ENCODE measurements at regions of chr18 and their contacts with region 1.

Region 1: DNA sequence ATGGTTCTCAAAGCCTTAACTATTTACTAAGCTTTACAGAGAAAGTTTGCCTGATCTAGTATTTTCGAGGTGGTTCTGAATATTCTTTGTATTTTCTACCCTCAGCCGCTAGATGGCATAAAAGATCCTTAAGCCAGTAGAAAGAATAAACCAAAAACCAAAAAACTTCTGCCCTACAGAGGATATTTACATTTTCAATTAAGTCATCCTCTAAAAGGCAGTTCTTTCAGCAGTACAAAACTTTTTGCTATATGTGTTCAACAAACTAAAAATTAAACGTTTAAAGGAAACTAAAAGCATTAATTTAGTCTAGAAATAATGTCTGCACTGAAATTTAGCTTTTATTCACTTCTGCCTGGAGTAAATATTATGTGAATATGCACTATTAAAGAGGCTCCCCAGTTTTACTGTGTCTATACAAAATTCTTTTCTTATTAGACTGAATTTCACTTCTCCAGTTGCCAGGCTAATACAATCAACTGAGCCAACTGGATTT is 297.5 kb downstream of the PIEZO2 start:
- DNase-seq: no peak
- H3K4me3 ChIP-seq: no peak overlapping the region
- H3K27ac ChIP-seq: no peak overlapping the region
- H3K4me1 ChIP-seq: peaks cover 0 to 7% (median 3%) of the 10 kb centered on the region in 4 experiments; a peak in 4 of 7 replicates
- H3K27me3 ChIP-seq: no peaks in the 10 kb centered on the region
- CTCF ChIP-seq: peak in 2 of 3 experiments; percentile 52 to 53; a peak in 2 of 4 replicates
- EP300 ChIP-seq: no peak
- POLR2A ChIP-seq: no peak
- RAD21 ChIP-seq: peak; percentile 79 to 85

Region 2: GRCh38 chr18:10748641-10749040 is 103.2 kb before region 1 on chr18:
- CTCF ChIA-PET with region 1: no interaction called
- POLR2A ChIA-PET with region 1: no interaction called
- DNase-seq: no peak
- H3K4me3 ChIP-seq: no peak overlapping the region
- H3K27ac ChIP-seq: no peak overlapping the region
- H3K4me1 ChIP-seq: peaks cover 0 to 1% (median 0%) of the 10 kb centered on the region in 4 experiments; a peak in 1 of 7 replicates
- H3K27me3 ChIP-seq: no peaks in the 10 kb centered on the region
- CTCF ChIP-seq: no peak
- EP300 ChIP-seq: no peak
- POLR2A ChIP-seq: no peak
- RAD21 ChIP-seq: no peak

Region 3: GRCh38 chr18:10841203-10841602 is 10.7 kb before region 1 on chr18:
- CTCF ChIA-PET with region 1: interaction called, 14 read pairs
- POLR2A ChIA-PET with region 1: no interaction called
- DNase-seq: no peak
- H3K4me3 ChIP-seq: no peak overlapping the region
- H3K27ac ChIP-seq: no peak overlapping the region
- H3K4me1 ChIP-seq: no peaks in the 10 kb centered on the region
- H3K27me3 ChIP-seq: peaks cover 0 to 1% (median 0%) of the 10 kb centered on the region in 4 experiments; a peak in 1 of 7 replicates
- CTCF ChIP-seq: no peak
- EP300 ChIP-seq: no peak
- POLR2A ChIP-seq: no peak
- RAD21 ChIP-seq: no peak

Region 4: GRCh38 chr18:10912790-10913545 is 61.1 kb after region 1 on chr18:
- CTCF ChIA-PET with region 1: no interaction called
- POLR2A ChIA-PET with region 1: no interaction called
- DNase-seq: no peak
- H3K4me3 ChIP-seq: no peak overlapping the region
- H3K27ac ChIP-seq: no peak overlapping the region
- H3K4me1 ChIP-seq: no peaks in the 10 kb centered on the region
- H3K27me3 ChIP-seq: peaks cover 0 to 1% (median 0%) of the 10 kb centered on the region in 4 experiments; a peak in 1 of 7 replicates
- CTCF ChIP-seq: no peak
- EP300 ChIP-seq: no peak
- POLR2A ChIP-seq: no peak
- RAD21 ChIP-seq: no peak

Region 5: DNA sequence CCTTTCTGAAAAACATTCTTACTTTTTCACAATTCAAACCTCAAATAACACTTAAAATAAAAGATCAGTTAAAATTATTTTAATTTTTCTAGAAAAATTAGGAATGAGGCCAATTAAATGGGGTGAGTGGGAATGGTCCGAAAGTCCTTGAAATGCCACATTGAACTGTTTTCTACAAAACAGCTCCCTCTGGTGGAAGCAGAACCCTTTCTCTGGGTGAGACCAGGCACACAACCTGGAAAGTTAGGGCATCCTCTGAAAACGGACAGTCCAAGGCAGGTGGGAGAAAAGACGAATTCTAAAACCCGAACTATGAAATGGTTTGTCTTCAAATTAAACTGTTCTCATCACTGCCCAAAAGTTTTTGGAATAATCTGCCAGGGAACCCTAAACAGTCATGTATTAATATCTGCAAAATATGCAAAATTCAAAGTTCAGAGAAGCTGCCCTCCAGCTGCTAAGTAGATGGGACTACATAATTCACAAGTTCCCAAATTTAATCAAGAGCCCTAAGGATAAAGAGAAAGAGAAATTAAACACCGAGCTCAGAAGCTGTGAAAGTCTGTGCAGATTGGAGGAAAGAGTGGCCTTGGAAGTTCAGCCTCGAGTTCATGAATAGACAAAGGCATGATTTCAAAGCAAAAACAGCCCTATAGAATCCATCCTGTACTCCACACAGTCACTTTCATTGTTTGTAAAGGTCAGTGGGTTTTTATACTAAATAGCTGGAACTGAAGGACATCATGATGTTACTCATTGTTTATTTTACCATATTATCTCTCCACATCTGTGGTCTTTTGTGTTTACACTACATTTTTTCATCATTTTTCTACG is 189.2 kb after region 1 on chr18:
- CTCF ChIA-PET with region 1: interaction called, 78 read pairs
- POLR2A ChIA-PET with region 1: no interaction called
- DNase-seq: peak in 1 of 2 experiments; percentile 58
- H3K4me3 ChIP-seq: no peak overlapping the region
- H3K27ac ChIP-seq: no peak overlapping the region
- H3K4me1 ChIP-seq: peaks cover 0 to 4% (median 0%) of the 10 kb centered on the region in 4 experiments; a peak in 1 of 7 replicates
- H3K27me3 ChIP-seq: no peaks in the 10 kb centered on the region
- CTCF ChIP-seq: peak; percentile 42 to 76 (median 73)
- EP300 ChIP-seq: no peak
- POLR2A ChIP-seq: no peak
- RAD21 ChIP-seq: peak; percentile 80 to 87